Heart left ventricle (tissue), 16 donors: ENCODE measurements at regions of chr2 and their contacts with region 1.

Region 1: GRCh38 chr2:5365871-5366461 is 326.2 kb upstream of the SOX11 start:
- DNase-seq: peak; percentile 40 to 70 (median 50)
- ATAC-seq: peak in 3 of 4 donors; percentile 70 to 84 (median 79)
- H3K4me3 ChIP-seq: no peak overlapping the region
- H3K27ac ChIP-seq: no peak overlapping the region
- H3K4me1 ChIP-seq: peaks cover 0 to 4% (median 0%) of the 10 kb centered on the region in 12 donors
- H3K27me3 ChIP-seq: no peaks in the 10 kb centered on the region
- CTCF ChIP-seq: peak; percentile 61 to 87 (median 74)
- POLR2A ChIP-seq: no peak

Region 2: GRCh38 chr2:3959372-3959771 is 1406.6 kb before region 1 on chr2:
- intact Hi-C with region 1: loop called in 4 of 10 experiments (anchors 5 to 10 kb)
- DNase-seq: no peak
- ATAC-seq: no peak
- H3K4me3 ChIP-seq: no peak overlapping the region
- H3K27ac ChIP-seq: no peak overlapping the region
- H3K4me1 ChIP-seq: no peaks in the 10 kb centered on the region
- H3K27me3 ChIP-seq: peaks cover 0 to 15% (median 0%) of the 10 kb centered on the region in 9 donors
- CTCF ChIP-seq: peak; percentile 58 to 81 (median 70)
- POLR2A ChIP-seq: no peak

Region 3: GRCh38 chr2:4992226-4992625 is 373.7 kb before region 1 on chr2:
- intact Hi-C with region 1: loop called in 4 of 10 experiments (anchors 1 to 5 kb)
- DNase-seq: no peak
- ATAC-seq: peak in 2 of 4 donors; percentile 45 to 66
- H3K4me3 ChIP-seq: no peak overlapping the region
- H3K27ac ChIP-seq: no peak overlapping the region
- H3K4me1 ChIP-seq: no peaks in the 10 kb centered on the region
- H3K27me3 ChIP-seq: peaks cover 0 to 4% (median 0%) of the 10 kb centered on the region in 9 donors
- CTCF ChIP-seq: peak in 9 of 12 donors; percentile 8 to 55 (median 29)
- POLR2A ChIP-seq: no peak